ENCODE measurements at regions of chr17 and their contacts with region 1.

Region 1: GRCh38 chr17:50151041-50151936 is 812 bp upstream of the PPP1R9B start:
- DNase-seq: peak; percentile 64 to 92 (median 82)
- ATAC-seq: peak; percentile 65
- H3K4me3 ChIP-seq: peak overlapping the region; percentile 81 to 92
- H3K4me3 Mint-ChIP-seq: peak overlapping the region; percentile 86
- H3K27ac ChIP-seq: peak overlapping the region; percentile 22 to 70
- H3K27ac Mint-ChIP-seq: peak overlapping the region; percentile 89
- H3K4me1 ChIP-seq: peaks cover 44% of the 10 kb centered on the region
- H3K4me1 Mint-ChIP-seq: peaks cover 46% of the 10 kb centered on the region
- H3K27me3 ChIP-seq: no peaks in the 10 kb centered on the region
- H3K27me3 Mint-ChIP-seq: no peaks in the 10 kb centered on the region
- CTCF ChIP-seq: peak; percentile 57

Region 2: DNA sequence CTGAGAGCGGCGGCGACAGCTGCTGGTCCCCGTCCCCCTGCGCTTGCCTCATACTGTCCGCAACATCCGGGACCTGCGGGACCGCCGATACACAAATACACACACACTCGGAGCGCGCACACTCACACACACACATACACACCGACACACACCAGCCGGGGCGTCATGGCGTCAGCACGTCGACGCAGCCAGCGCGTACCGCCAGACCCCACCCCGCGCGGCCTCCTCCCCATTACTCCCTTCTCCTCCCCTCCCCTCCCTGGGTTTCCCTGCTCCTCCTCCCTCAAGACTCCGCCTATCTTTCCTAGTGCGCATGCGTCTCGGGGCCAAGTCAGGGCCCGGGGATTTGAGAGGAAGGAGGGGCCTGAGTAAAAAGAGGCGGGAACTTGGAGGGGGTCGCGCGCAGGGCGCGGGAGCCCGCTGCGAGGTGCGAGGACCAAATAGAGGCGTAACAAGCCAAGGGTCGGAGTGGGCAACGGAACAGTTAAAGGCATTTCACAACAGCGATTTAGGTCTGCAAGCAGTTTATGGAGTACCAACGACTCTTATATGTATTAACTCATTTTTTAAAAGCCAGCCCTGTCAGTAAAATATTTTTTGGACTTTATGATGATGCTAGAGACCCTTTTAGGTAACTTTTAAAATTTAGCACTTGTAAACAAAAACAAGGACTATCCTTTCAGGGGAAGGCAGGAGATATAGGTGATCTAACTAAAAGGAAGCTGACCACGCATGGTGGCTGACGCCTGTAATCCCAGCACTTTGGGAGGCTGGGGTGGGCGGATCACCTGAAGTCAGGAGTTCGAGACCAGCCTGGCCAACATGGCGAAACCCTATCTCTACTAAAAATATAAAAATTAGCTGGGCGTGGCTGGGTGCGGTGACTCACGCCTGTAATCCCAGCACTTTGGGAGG is 473.1 kb before region 1 on chr17 and contains the start of gene SPOP:
- CTCF ChIA-PET with region 1: no interaction called
- POLR2A ChIA-PET with region 1: no interaction called
- intact Hi-C with region 1: loop called in 1 of 2 experiments (anchors 5 kb)
- DNase-seq: peak; percentile 97 to 100 (median 99)
- ATAC-seq: peak; percentile 94
- H3K4me3 ChIP-seq: peak within 1 kb of the TSS; percentile 76 to 81
- H3K4me3 Mint-ChIP-seq: peak within 1 kb of the TSS; percentile 97
- H3K27ac ChIP-seq: peak within 1 kb of the TSS; percentile 91 to 98
- H3K27ac Mint-ChIP-seq: peak within 1 kb of the TSS; percentile 100
- H3K4me1 ChIP-seq: peaks cover 29% of the 10 kb centered on the region
- H3K4me1 Mint-ChIP-seq: peaks cover 49% of the 10 kb centered on the region
- H3K27me3 ChIP-seq: no peaks in the 10 kb centered on the region
- H3K27me3 Mint-ChIP-seq: no peaks in the 10 kb centered on the region
- CTCF ChIP-seq: no peak
- total RNA-seq, gene SPOP: 30.5 to 34.3 TPM

Region 3: DNA sequence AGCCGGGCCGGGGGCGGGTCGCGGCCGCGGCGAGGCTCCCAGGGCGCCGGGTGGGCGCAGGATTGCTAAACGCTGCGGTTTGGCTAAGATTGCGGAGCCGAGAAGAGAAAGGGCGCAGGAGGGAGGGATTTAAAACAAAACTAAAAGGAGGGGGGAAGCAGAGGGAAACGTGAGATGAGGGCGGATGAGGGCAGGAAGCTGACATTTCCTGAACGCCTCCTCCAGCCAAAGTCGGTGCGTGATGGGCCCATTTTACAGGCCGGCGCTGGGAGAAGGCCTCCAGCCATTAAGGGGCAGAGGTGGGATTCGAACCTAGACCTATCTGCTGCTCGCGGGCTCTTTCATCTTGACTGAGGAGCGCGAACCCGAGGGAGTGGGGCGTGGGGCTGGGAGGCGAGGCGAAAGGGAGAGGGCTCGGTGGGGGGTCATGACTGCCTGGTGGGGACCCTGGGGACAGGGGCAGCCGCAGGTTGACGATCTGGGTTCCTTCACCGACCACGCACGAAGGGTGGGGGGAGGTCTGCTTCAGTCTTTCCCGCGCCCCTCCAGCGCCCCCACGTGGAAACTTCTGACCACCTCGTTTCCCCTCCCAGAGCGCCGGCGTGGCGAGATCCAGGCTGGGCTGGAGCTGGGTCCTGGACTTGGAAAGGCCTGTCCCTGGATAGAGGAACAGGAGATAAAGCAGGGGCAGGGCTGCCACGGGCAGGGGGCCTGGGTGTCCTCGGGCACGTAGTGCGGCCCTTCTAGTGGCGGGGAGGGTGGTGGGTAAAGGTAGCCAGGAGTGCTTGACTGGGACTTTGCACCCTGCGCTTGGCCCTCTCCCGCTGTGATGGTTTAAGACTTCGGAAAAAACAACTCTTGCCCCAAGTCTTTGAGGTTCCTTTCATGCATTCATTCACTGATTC is 299.6 kb before region 1 on chr17:
- CTCF ChIA-PET with region 1: no interaction called
- POLR2A ChIA-PET with region 1: no interaction called
- intact Hi-C with region 1: loop called in 1 of 2 experiments (anchors 5 kb)
- DNase-seq: peak; percentile 47 to 87 (median 76)
- ATAC-seq: peak; percentile 77
- H3K4me3 ChIP-seq: peak overlapping the region; percentile 73 to 83
- H3K4me3 Mint-ChIP-seq: peak overlapping the region; percentile 92
- H3K27ac ChIP-seq: peak overlapping the region; percentile 59 to 66
- H3K27ac Mint-ChIP-seq: peak overlapping the region; percentile 89
- H3K4me1 ChIP-seq: peaks cover 17% of the 10 kb centered on the region
- H3K4me1 Mint-ChIP-seq: peaks cover 15% of the 10 kb centered on the region
- H3K27me3 ChIP-seq: no peaks in the 10 kb centered on the region
- H3K27me3 Mint-ChIP-seq: no peaks in the 10 kb centered on the region
- CTCF ChIP-seq: peak; percentile 72

Region 4: DNA sequence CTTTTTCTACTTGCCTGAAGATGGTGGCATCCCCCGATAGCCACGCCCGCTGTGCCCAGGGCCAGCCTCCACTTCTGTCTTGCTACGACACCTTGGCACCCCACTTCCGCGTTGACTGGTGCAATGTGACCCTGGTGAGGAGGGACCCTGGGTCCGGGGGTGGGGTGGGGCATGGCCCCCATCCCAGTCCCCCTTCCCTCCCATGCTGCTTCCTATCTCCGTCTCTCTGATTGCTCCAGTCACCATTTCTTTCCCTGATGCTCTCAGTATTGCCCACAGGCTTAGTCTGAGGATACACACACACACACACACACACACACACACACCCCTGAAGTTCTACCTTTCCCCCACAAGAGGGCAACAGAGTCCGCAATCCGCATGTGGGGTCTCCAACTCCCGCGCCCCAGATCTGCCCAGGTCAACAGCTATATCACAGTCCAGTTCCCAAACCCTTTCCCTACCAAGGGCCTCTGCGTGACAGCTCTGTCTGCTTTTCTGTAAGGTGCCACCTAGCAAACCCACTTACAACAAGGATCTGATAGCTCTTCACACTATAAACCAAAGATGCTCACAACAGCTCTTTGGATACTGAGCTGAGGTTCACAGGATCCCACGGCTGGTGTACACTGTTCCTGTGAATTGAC is 18.0 kb after region 1 on chr17:
- CTCF ChIA-PET with region 1: interaction called, 10 read pairs
- POLR2A ChIA-PET with region 1: interaction called, 4 read pairs
- intact Hi-C with region 1: no loop called
- DNase-seq: peak; percentile 37 to 83 (median 70)
- ATAC-seq: peak; percentile 86
- H3K4me3 ChIP-seq: peak overlapping the region; percentile 28 to 32
- H3K4me3 Mint-ChIP-seq: peak overlapping the region; percentile 75
- H3K27ac ChIP-seq: peak overlapping the region; percentile 17 to 28
- H3K27ac Mint-ChIP-seq: peak overlapping the region; percentile 90
- H3K4me1 ChIP-seq: peaks cover 20% of the 10 kb centered on the region
- H3K4me1 Mint-ChIP-seq: peaks cover 10% of the 10 kb centered on the region
- H3K27me3 ChIP-seq: no peaks in the 10 kb centered on the region
- H3K27me3 Mint-ChIP-seq: peaks cover 3% of the 10 kb centered on the region
- CTCF ChIP-seq: peak; percentile 55

Measured in CD8-positive, alpha-beta T cell (primary cell).